Activated CD4-positive, alpha-beta memory T cell treated with anti-CD3 and anti-CD28 coated beads for 36 hours (primary cell): ENCODE measurements at regions of chr18 and their contacts with region 1.

Region 1: GRCh38 chr18:59139371-59140298 is at the start of gene SEC11C:
- DNase-seq: peak; percentile 97
- H3K4me3 Mint-ChIP-seq: peak within 1 kb of the TSS; percentile 94
- H3K27ac Mint-ChIP-seq: peak within 1 kb of the TSS; percentile 98
- H3K4me1 Mint-ChIP-seq: peaks cover 38% of the 10 kb centered on the region
- H3K27me3 Mint-ChIP-seq: peaks cover 6% of the 10 kb centered on the region
- total RNA-seq, gene SEC11C: 119 to 130 TPM

Region 2: GRCh38 chr18:59085797-59086196 is 53.8 kb before region 1 on chr18:
- CTCF ChIA-PET with region 1: interaction called, 38 read pairs
- POLR2A ChIA-PET with region 1: no interaction called
- intact Hi-C with region 1: loop called (anchors 1 kb)
- DNase-seq: no peak
- H3K4me3 Mint-ChIP-seq: no peak overlapping the region
- H3K27ac Mint-ChIP-seq: no peak overlapping the region
- H3K4me1 Mint-ChIP-seq: peaks cover 8% of the 10 kb centered on the region
- H3K27me3 Mint-ChIP-seq: peaks cover 16% of the 10 kb centered on the region

Region 3: DNA sequence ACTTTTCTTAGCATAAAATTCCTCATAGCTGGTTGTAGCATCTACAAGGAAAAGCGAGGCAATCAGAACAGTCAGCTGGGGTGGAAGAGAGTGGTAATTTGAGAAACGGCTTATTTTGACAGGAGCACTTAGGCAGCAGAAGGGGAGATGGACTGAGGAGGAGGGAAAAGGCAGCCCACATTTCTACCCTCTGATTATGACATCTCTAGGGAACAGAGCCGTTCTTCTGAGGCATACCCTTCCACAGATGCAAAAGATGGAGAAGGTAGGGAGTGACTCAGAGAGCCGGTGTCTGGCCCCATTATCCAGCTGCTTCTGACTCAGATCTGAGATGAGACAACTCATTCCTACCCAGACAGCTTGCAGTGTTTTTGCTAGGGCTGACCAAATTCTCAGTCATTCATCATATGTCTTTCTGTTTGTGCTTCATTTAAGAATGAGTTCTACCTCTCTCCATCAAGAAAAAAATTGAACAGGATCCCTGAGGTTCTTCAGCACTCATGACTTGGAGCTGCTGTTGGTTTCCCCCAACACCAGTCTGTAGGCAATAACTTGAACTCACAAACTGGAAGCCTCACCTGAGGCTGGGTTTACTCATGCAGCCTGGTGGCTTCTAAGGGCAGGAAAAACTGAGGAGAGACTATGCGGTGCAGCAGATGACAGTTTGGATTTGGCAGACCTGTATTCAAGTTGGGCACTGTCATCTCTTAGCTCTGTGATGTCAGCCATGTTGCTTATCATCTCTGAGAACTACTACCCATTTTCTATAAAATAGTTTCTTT is 15.9 kb before region 1 on chr18:
- CTCF ChIA-PET with region 1: interaction called, 5 read pairs
- POLR2A ChIA-PET with region 1: interaction called, 15 read pairs
- intact Hi-C with region 1: loop called (anchors 1 kb)
- DNase-seq: peak; percentile 76
- H3K4me3 Mint-ChIP-seq: no peak overlapping the region
- H3K27ac Mint-ChIP-seq: peak overlapping the region; percentile 78
- H3K4me1 Mint-ChIP-seq: peaks cover 10% of the 10 kb centered on the region
- H3K27me3 Mint-ChIP-seq: peaks cover 24% of the 10 kb centered on the region

Region 4: GRCh38 chr18:59340817-59341216 is 201.2 kb after region 1 on chr18:
- CTCF ChIA-PET with region 1: no interaction called
- POLR2A ChIA-PET with region 1: no interaction called
- intact Hi-C with region 1: loop called (anchors 1 kb)
- DNase-seq: no peak
- H3K4me3 Mint-ChIP-seq: no peak overlapping the region
- H3K27ac Mint-ChIP-seq: no peak overlapping the region
- H3K4me1 Mint-ChIP-seq: peaks cover 46% of the 10 kb centered on the region
- H3K27me3 Mint-ChIP-seq: no peaks in the 10 kb centered on the region

Region 5: GRCh38 chr18:59358712-59359575 is 219.3 kb after region 1 on chr18 and contains the start of gene LMAN1:
- CTCF ChIA-PET with region 1: interaction called, 5 read pairs
- POLR2A ChIA-PET with region 1: interaction called, 6 read pairs
- intact Hi-C with region 1: loop called (anchors 1 kb)
- DNase-seq: peak; percentile 97
- H3K4me3 Mint-ChIP-seq: peak within 1 kb of the TSS; percentile 83
- H3K27ac Mint-ChIP-seq: peak within 1 kb of the TSS; percentile 94
- H3K4me1 Mint-ChIP-seq: peaks cover 26% of the 10 kb centered on the region
- H3K27me3 Mint-ChIP-seq: no peaks in the 10 kb centered on the region
- total RNA-seq, gene LMAN1: 155 to 158 TPM

Region 6: DNA sequence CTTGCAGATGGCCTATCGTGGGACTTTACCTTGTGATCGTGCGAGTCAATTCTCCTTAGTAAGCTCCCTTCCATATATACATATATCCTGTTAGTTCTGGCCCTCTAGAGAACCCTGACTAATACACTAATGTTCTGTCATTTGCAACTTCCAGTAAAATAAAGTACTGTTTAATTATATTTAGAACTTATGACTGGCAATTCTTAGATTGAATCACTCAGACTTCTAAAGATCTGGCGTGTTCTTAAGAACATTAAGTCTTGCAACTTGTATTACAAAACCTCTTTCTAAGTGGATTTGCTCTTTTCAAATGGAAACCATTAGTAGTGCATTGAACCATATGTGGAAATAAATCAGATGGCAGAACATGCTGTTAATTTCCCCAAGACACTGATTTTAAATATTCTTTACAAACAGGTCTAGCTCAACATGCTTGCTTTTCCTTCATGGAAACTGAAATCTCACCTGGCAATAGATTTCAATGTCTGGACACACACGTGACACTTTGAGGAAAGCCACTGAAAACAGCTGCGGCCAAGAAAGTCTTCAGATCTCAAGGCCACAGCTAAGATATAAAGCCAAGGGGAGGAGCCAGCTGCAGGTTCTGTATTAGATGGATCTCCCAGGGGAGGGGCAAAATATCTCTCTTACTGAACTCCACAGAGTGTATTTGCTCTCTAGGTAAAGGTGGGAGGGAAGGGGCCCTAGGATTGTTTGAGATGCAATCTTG is 810.7 kb after region 1 on chr18:
- CTCF ChIA-PET with region 1: no interaction called
- POLR2A ChIA-PET with region 1: no interaction called
- intact Hi-C with region 1: loop called (anchors 5 kb)
- DNase-seq: peak; percentile 35
- H3K4me3 Mint-ChIP-seq: no peak overlapping the region
- H3K27ac Mint-ChIP-seq: peak overlapping the region; percentile 68
- H3K4me1 Mint-ChIP-seq: peaks cover 49% of the 10 kb centered on the region
- H3K27me3 Mint-ChIP-seq: no peaks in the 10 kb centered on the region